Activated T-helper 1 cell treated with anti-CD3 and anti-CD28 coated beads, Interleukin-12 subunit alpha, Interleukin-12 subunit beta, Interleukin-2, Interleukin-4 antibody, amounts not matched to agents 30 ng/mL and 10 ng/mL and 1 ng/mL, durations not matched to agents 14 hours and 24 hours and 36 hours (primary cell): ENCODE measurements at regions of chr6 and their contacts with region 1.

Region 1: DNA sequence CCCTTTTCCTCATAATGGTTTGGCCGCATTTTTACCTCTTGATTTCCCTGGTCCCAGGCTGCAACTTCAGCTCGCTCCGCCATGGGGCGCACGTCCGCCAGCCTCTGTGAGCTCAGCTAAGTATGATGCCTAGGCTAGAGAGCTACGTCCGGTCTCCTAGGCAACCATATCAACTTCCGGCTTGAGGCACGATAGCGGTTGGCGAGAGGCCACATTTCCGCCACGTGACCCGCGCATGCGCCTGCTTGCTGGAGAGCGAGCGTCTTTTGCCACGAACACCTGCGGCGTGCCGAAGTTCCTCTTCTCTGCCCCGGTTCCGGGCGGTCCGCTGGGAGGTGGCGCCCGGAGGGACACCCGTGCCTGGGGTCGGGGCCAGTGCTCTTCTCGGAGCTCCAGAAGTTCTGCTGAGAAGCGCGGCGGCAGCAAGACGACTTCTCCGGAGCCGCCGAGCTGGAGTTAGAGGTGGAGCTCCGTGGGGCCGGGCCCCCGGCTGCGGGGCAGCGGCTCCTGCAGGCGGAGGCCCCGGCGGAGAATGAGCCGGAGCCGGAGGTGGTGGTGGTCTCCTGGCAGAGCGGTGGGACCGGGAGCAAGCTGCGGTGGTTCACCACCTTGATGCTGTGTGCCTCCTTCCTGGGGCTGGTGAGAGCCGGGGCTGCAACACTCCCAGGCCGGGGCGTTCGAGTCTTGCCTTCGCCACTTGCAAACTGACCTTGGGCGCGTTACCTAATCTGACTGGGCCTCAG is 172.0 kb downstream of the SLC16A10 start:
- DNase-seq: peak; percentile 99
- H3K4me3 Mint-ChIP-seq: peak overlapping the region; percentile 81
- H3K27ac Mint-ChIP-seq: peak overlapping the region; percentile 87
- H3K4me1 Mint-ChIP-seq: peaks cover 34% of the 10 kb centered on the region
- H3K27me3 Mint-ChIP-seq: peaks cover 5% of the 10 kb centered on the region

Region 2: GRCh38 chr6:111171577-111172400 is 87.5 kb before region 1 on chr6:
- intact Hi-C with region 1: no loop called
- DNase-seq: no peak
- H3K4me3 Mint-ChIP-seq: no peak overlapping the region
- H3K27ac Mint-ChIP-seq: no peak overlapping the region
- H3K4me1 Mint-ChIP-seq: peaks cover 11% of the 10 kb centered on the region
- H3K27me3 Mint-ChIP-seq: peaks cover 5% of the 10 kb centered on the region

Region 3: GRCh38 chr6:111291336-111292259 is 32.3 kb after region 1 on chr6:
- intact Hi-C with region 1: loop called (anchors 1 kb)
- DNase-seq: no peak
- H3K4me3 Mint-ChIP-seq: no peak overlapping the region
- H3K27ac Mint-ChIP-seq: no peak overlapping the region
- H3K4me1 Mint-ChIP-seq: peaks cover 30% of the 10 kb centered on the region
- H3K27me3 Mint-ChIP-seq: no peaks in the 10 kb centered on the region

Region 4: DNA sequence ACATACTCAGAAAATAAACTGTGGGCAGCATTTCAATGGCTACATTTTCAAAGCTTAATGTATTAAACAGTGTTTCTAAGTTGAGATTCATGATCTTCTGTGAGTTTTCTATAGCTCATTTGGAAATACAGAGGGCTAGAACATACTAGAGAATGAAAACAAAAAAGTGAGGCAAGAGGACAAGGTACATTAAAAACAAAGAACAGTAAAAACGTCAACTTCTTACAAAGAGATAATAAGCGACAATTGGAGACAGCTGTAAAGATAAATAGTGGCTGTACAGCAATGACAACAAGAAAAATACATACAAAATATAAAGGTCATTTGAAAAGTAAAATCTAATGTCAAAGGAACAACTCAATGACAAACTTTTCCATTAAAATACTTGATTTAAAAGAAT is 129.4 kb after region 1 on chr6:
- intact Hi-C with region 1: no loop called
- DNase-seq: no peak
- H3K4me3 Mint-ChIP-seq: no peak overlapping the region
- H3K27ac Mint-ChIP-seq: no peak overlapping the region
- H3K4me1 Mint-ChIP-seq: no peaks in the 10 kb centered on the region
- H3K27me3 Mint-ChIP-seq: no peaks in the 10 kb centered on the region

Region 5: DNA sequence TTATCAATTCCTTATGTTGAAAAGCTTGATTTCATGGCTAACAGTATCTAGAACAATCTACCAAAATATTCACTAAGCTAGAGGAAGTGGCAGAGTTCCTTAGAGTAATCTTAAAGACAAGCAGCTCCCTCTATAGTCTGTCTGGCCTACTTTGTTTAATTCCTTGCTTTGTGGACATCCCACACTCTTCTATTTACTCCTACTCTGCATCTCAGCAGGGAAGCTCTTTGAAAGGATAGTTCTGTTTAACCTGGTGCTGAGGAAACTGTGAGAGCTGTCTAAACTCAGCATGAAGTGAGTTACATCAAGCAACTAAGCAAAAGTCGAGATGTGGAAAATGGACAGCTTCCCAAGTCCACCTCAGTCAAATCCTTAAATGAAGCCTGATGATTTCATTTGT is 219.5 kb after region 1 on chr6:
- intact Hi-C with region 1: loop called (anchors 1 kb)
- DNase-seq: no peak
- H3K4me3 Mint-ChIP-seq: no peak overlapping the region
- H3K27ac Mint-ChIP-seq: no peak overlapping the region
- H3K4me1 Mint-ChIP-seq: peaks cover 37% of the 10 kb centered on the region
- H3K27me3 Mint-ChIP-seq: no peaks in the 10 kb centered on the region

Region 6: GRCh38 chr6:111565326-111566221 is 306.3 kb after region 1 on chr6:
- intact Hi-C with region 1: loop called (anchors 2 kb)
- DNase-seq: no peak
- H3K4me3 Mint-ChIP-seq: no peak overlapping the region
- H3K27ac Mint-ChIP-seq: peak overlapping the region; percentile 83
- H3K4me1 Mint-ChIP-seq: peaks cover 48% of the 10 kb centered on the region
- H3K27me3 Mint-ChIP-seq: no peaks in the 10 kb centered on the region

Region 7: GRCh38 chr6:111642463-111643158 is 383.4 kb after region 1 on chr6:
- intact Hi-C with region 1: loop called (anchors 1 kb)
- DNase-seq: peak; percentile 12
- H3K4me3 Mint-ChIP-seq: no peak overlapping the region
- H3K27ac Mint-ChIP-seq: no peak overlapping the region
- H3K4me1 Mint-ChIP-seq: no peaks in the 10 kb centered on the region
- H3K27me3 Mint-ChIP-seq: no peaks in the 10 kb centered on the region

Region 8: GRCh38 chr6:112163295-112164257 is 904.3 kb after region 1 on chr6:
- intact Hi-C with region 1: loop called (anchors 1 kb)
- DNase-seq: peak; percentile 54
- H3K4me3 Mint-ChIP-seq: peak overlapping the region; percentile 53
- H3K27ac Mint-ChIP-seq: no peak overlapping the region
- H3K4me1 Mint-ChIP-seq: peaks cover 12% of the 10 kb centered on the region
- H3K27me3 Mint-ChIP-seq: peaks cover 51% of the 10 kb centered on the region